GM13976 (cell line): ENCODE measurements at regions of chr6 and their contacts with region 1.

Region 1: DNA sequence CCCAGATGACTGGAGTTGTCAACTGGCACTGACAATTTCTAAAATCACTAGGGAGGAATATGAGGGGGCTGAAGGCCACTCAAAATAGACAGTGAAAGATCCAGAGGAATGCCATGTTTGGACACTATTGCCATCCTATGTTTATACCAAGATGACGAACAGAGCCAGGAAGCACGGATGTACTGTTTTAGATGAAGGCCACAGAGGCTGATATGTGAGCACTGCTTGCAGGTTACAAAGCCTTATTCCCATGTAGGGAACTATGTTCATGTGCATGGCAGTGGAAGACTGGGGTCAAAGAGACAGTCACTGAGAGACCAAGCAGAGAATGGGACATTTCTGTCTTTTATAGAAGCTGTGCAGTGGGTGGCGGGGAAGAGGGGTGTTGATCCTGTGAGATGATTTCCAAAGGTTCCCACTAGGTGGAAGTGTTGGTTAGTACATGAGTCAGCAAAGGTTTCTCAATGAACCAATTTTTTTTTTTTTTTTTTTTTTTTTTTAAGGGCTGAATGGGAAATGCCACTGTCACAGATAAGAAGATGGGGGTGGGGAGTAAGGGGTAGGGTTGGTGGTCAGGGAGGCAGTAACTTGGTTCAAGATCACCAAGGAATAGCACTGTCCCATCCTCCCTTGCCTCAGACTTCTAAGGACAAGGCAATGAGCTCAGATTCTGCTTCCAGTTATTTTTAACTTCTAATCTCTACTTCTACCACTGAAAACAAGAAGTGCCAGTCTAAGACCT is 46.7 kb upstream of the MOCS1 start:
- DNase-seq: peak; percentile 13
- CTCF ChIP-seq: no peak

Region 2: DNA sequence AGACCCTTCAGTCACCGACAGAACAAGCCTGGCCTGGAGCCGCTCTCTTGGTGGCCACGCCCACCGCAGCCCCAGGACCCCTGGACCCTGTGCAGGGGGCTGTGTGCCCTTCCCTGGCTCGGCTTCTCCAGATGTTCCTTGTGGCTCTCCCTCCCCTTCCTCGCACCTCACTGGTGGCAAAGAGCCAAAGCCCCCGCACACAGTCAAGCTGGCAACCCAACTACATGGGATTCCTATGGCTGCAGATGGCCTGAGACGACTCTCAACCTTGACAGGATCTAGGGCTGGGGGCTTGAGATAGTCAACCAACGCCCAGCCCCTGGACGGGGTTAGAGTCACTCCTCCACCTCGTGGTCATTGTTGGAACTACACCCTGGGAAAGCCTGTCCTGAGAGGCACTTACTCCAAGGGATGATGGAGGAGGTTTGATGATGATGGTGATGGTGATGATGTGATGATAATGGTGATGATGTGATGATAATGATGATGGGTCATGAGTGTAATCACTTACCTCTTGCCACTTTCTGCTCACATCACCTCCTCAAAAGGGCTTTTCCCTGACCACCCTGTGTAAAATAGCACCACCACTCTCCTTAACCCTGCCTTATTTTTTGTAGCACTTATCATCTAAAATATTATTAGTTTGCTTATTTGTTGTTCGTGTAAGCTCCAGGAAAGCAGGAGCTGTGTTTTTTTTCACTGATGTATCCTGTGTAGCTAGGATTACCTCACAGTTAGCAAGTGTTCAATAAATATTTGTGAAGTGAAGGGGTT is 327.7 kb after region 1 on chr6:
- in situ Hi-C with region 1: loop called (anchors 10 kb)
- DNase-seq: peak; percentile 78
- CTCF ChIP-seq: peak; percentile 90